Activated T-helper 1 cell treated with anti-CD3 and anti-CD28 coated beads, Interleukin-12 subunit alpha, Interleukin-12 subunit beta, Interleukin-2, Interleukin-4 antibody, amounts not matched to agents 30 ng/mL and 10 ng/mL and 1 ng/mL, durations not matched to agents 14 hours and 24 hours and 36 hours (primary cell): ENCODE measurements at regions of chr14 and their contacts with region 1.

Region 1: GRCh38 chr14:99266181-99267178 is 5.5 kb downstream of the BCL11B start:
- DNase-seq: peak; percentile 82
- H3K4me3 Mint-ChIP-seq: peak overlapping the region; percentile 99
- H3K27ac Mint-ChIP-seq: peak overlapping the region; percentile 100
- H3K4me1 Mint-ChIP-seq: peaks cover 72% of the 10 kb centered on the region
- H3K27me3 Mint-ChIP-seq: no peaks in the 10 kb centered on the region

Region 2: GRCh38 chr14:97290977-97291376 is 1975.5 kb before region 1 on chr14:
- intact Hi-C with region 1: loop called (anchors 5 kb)
- DNase-seq: no peak
- H3K4me3 Mint-ChIP-seq: no peak overlapping the region
- H3K27ac Mint-ChIP-seq: no peak overlapping the region
- H3K4me1 Mint-ChIP-seq: peaks cover 20% of the 10 kb centered on the region
- H3K27me3 Mint-ChIP-seq: peaks cover 53% of the 10 kb centered on the region

Region 3: DNA sequence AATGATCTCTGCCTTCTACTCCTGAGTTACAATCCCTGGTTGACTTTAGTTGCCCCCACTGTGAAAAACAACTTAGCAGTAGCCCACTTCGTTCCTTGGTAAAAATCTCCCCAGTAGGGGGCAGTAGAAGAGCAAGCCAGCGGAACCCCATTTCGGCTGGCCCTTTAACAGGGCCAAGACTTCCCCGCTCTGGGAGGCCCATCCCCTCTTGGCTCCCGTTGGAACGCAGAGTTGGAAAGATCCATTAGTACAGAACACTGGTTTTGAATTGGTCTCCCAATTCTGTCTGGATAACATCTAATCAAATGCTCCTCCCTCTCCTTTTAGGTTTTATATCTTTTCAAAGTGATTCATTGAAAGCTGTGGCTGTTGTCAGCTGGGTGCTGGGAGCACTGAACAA is 1127.8 kb before region 1 on chr14:
- intact Hi-C with region 1: loop called (anchors 1 kb)
- DNase-seq: peak; percentile 69
- H3K4me3 Mint-ChIP-seq: peak overlapping the region; percentile 64
- H3K27ac Mint-ChIP-seq: peak overlapping the region; percentile 87
- H3K4me1 Mint-ChIP-seq: peaks cover 87% of the 10 kb centered on the region
- H3K27me3 Mint-ChIP-seq: no peaks in the 10 kb centered on the region

Region 4: DNA sequence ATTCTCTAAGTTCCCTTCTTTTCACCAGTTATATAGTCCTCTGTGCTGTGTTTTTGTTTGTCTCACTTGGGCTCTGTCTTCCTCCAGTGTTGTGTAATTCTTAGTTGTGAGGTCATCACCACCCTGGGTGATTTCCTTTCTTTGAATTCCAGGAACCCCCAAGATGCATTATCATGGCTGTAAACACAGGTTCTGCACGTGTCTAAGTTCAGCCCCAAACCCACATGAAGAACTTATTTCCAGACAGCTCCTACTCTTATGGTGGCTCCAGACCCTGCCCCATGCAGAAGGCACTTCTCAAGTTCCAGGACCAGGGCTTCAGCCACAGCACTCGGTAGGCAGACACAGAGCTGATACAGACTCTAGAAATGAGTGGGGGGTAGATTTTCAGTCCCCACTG is 555.0 kb before region 1 on chr14:
- intact Hi-C with region 1: loop called (anchors 5 kb)
- DNase-seq: peak; percentile 32
- H3K4me3 Mint-ChIP-seq: peak overlapping the region; percentile 23
- H3K27ac Mint-ChIP-seq: peak overlapping the region; percentile 69
- H3K4me1 Mint-ChIP-seq: peaks cover 26% of the 10 kb centered on the region
- H3K27me3 Mint-ChIP-seq: peaks cover 1% of the 10 kb centered on the region

Region 5: GRCh38 chr14:99192028-99192621 is 74.4 kb before region 1 on chr14:
- intact Hi-C with region 1: loop called (anchors 1 kb)
- DNase-seq: no peak
- H3K4me3 Mint-ChIP-seq: peak overlapping the region; percentile 90
- H3K27ac Mint-ChIP-seq: peak overlapping the region; percentile 99
- H3K4me1 Mint-ChIP-seq: peaks cover 93% of the 10 kb centered on the region
- H3K27me3 Mint-ChIP-seq: no peaks in the 10 kb centered on the region

Region 6: DNA sequence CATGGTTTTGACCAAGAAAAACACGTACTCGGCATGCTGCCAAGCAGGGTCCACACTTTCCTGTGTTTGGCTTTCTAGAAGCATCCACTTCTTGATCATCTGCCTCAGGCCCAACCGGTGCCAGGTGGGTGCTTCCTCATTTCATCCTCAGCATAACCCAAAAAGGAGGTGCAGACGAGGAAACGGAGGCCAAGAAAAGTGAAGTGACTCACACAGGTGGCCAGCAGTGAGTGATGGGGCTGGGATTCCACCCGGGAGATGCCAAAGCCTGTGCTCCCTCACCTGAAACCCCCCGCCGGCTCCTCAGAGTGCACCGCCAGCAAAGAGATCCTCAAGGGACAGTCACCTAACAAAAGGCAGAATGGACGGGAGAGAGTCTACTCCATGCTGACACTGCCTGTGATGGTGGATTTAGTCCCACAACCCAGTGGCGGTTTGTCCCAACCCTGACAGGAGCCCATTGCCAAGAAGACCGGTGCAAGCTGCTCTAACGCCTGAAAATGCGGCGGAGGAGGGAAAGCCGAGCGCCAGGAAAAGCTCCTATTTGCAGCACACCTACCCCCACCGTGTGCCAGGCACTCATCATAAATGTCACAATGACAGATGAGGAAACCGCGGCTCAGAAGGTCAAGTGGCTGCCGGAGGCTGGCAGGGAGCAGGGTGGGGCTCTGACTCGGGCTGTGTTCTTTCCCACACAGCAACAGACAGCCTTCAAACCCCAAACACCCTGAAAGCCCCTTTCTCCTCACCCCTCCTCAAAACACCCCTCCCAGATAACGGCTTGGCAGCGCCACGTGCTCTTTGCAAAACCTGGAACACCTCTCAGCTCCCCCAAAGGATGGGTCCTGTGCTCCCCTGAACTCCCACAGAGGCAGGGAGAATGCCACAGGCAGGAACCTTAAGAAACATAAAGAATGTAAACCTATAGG is 13.3 kb before region 1 on chr14:
- intact Hi-C with region 1: loop called (anchors 1 kb)
- DNase-seq: no peak
- H3K4me3 Mint-ChIP-seq: peak overlapping the region; percentile 78
- H3K27ac Mint-ChIP-seq: peak overlapping the region; percentile 97
- H3K4me1 Mint-ChIP-seq: peaks cover 95% of the 10 kb centered on the region
- H3K27me3 Mint-ChIP-seq: no peaks in the 10 kb centered on the region